ENCODE measurements at regions of chr16 and their contacts with region 1.

Region 1: DNA sequence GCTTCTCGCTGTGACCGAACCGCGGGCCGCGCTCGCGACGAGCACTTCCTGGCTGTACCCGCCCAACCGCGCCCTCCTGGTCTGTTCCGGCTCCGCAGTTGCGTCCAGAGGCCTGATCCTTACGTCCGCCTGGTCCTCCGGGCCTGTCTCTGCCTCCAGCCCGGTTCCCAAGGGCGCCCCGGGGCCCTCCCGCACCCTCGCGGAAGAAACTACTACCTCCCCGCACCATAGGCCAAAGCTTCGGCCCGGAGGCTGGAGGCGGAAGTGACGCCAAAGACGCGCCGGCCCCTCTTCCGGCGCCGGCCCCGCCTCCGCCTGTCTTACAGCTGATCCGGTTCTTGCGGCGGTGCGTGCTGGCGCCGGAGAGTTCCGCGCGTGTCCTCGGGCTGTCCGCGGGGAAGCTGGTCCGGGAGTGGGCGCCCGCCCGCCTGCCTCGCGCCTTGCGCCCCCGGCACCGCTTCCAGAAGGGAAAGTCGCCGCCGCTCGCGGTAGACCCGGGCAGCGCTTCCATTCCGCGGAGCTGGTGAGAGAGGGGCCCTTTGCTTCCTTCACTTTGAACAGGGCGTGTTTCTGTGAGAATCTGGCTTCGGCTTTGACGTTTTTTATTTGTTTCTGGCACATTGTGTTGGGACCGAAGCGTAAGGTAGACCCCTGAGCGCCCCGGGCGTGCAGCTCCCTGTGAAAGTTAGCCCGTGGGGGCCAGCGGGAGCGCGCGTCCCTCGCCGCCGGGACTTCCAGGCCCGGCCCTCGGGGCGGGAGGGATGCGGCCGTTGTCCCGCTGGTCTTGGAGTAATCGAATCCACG is at the start of gene ZNF778:
- DNase-seq: peak; percentile 78 to 86
- H3K4me3 ChIP-seq: peak within 1 kb of the TSS; percentile 71
- H3K4me3 Mint-ChIP-seq: peak within 1 kb of the TSS; percentile 89
- H3K27ac Mint-ChIP-seq: peak within 1 kb of the TSS; percentile 81
- H3K4me1 ChIP-seq: no peaks in the 10 kb centered on the region
- H3K4me1 Mint-ChIP-seq: no peaks in the 10 kb centered on the region
- H3K27me3 ChIP-seq: no peaks in the 10 kb centered on the region
- H3K27me3 Mint-ChIP-seq: no peaks in the 10 kb centered on the region
- CTCF ChIP-seq: no peak
- total RNA-seq, gene ZNF778: 13.1 and 18.1 TPM in 2 replicates

Region 2: GRCh38 chr16:88811769-88812512 is 405.6 kb before region 1 on chr16 and contains the start of gene APRT:
- CTCF ChIA-PET with region 1: no interaction called
- POLR2A ChIA-PET with region 1: interaction called, 3 read pairs
- intact Hi-C with region 1: loop called (anchors 2 kb)
- DNase-seq: peak; percentile 97 to 99
- H3K4me3 ChIP-seq: peak within 1 kb of the TSS; percentile 96
- H3K4me3 Mint-ChIP-seq: peak within 1 kb of the TSS; percentile 97
- H3K27ac Mint-ChIP-seq: peak within 1 kb of the TSS; percentile 98
- H3K4me1 ChIP-seq: peaks cover 15% of the 10 kb centered on the region
- H3K4me1 Mint-ChIP-seq: no peaks in the 10 kb centered on the region
- H3K27me3 ChIP-seq: no peaks in the 10 kb centered on the region
- H3K27me3 Mint-ChIP-seq: no peaks in the 10 kb centered on the region
- CTCF ChIP-seq: peak in 1 of 2 experiments; percentile 19
- total RNA-seq, gene APRT: 251 and 268 TPM in 2 replicates

Region 3: GRCh38 chr16:88941913-88942909 is 275.4 kb before region 1 on chr16:
- CTCF ChIA-PET with region 1: interaction called, 8 read pairs
- POLR2A ChIA-PET with region 1: no interaction called
- intact Hi-C with region 1: loop called (anchors 1 kb)
- DNase-seq: peak in 1 of 2 experiments; percentile 71
- H3K4me3 ChIP-seq: no peak overlapping the region
- H3K4me3 Mint-ChIP-seq: peak overlapping the region; percentile 58
- H3K27ac Mint-ChIP-seq: no peak overlapping the region
- H3K4me1 ChIP-seq: peaks cover 4% of the 10 kb centered on the region; the same call in 1 of the 2 replicates
- H3K4me1 Mint-ChIP-seq: no peaks in the 10 kb centered on the region
- H3K27me3 ChIP-seq: no peaks in the 10 kb centered on the region; the same call in none of the 2 replicates
- H3K27me3 Mint-ChIP-seq: peaks cover 27% of the 10 kb centered on the region
- CTCF ChIP-seq: peak; percentile 39 to 69

Region 4: GRCh38 chr16:89052890-89053592 is 164.5 kb before region 1 on chr16:
- CTCF ChIA-PET with region 1: interaction called, 3 read pairs
- POLR2A ChIA-PET with region 1: no interaction called
- intact Hi-C with region 1: loop called (anchors 2 kb)
- DNase-seq: peak; percentile 81 to 88
- H3K4me3 ChIP-seq: peak overlapping the region; percentile 68
- H3K4me3 Mint-ChIP-seq: peak overlapping the region; percentile 72
- H3K27ac Mint-ChIP-seq: peak overlapping the region; percentile 30
- H3K4me1 ChIP-seq: no peaks in the 10 kb centered on the region
- H3K4me1 Mint-ChIP-seq: peaks cover 6% of the 10 kb centered on the region
- H3K27me3 ChIP-seq: no peaks in the 10 kb centered on the region; the same call in 1 of the 2 replicates
- H3K27me3 Mint-ChIP-seq: no peaks in the 10 kb centered on the region
- CTCF ChIP-seq: peak in 1 of 2 experiments; percentile 44

Region 5: GRCh38 chr16:89171463-89172170 is 46.0 kb before region 1 on chr16 and contains the start of gene CDH15:
- CTCF ChIA-PET with region 1: interaction called, 10 read pairs
- POLR2A ChIA-PET with region 1: no interaction called
- intact Hi-C with region 1: loop called (anchors 1 kb)
- DNase-seq: peak; percentile 98 to 99
- H3K4me3 ChIP-seq: peak within 1 kb of the TSS; percentile 39
- H3K4me3 Mint-ChIP-seq: peak within 1 kb of the TSS; percentile 74
- H3K27ac Mint-ChIP-seq: no peak within 1 kb of the TSS
- H3K4me1 ChIP-seq: peaks cover 24% of the 10 kb centered on the region
- H3K4me1 Mint-ChIP-seq: peaks cover 7% of the 10 kb centered on the region
- H3K27me3 ChIP-seq: peaks cover 5% of the 10 kb centered on the region
- H3K27me3 Mint-ChIP-seq: peaks cover 7% of the 10 kb centered on the region
- CTCF ChIP-seq: no peak
- total RNA-seq, gene CDH15: not detected in 2 replicates

Region 6: DNA sequence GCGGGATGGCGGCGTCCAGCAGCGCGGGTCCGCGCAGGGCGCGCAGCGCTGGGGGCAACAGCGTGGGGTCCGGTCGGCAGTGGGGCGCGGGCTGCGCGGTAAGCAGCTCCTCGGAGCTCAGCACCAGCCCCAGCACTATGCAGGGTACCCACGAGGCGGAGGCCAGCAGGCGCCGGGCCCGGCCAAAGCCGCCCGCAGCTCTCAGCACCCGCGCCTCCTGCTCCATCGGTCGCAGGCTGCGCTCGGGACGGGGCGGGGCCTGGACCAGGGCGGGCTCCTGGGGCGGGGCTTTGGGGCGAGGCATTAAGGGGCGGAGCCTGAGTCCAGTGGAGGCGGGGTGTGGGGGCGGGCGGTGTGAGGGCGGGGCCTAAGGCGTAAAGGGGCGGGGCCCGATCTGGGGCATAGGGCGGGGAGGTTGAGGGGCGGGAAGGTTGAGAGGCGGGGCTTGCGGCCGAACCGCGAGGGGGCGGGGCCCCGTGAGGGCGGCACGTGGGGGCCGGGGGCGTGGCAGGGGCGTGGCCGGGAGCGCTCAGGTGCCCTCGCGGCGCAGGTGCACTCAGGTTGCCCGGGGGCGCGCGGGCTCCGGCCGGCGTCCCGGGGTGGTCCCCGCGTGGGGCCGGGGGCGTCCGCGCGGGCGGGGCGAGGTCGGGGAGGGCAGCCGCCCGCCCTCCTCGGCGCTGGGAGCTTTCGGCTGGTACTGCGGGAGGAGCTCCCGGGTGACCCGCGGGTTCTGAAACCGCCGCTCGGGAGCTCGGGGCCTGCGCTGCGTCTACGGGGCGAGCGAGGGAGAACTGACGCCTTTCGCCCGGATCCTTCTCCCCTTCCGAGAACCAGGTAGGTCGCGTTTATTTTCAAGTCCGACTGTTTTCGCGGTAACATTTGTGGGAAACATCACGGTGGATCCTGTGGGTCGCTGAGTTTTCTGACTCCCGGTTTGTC is 15.9 kb before region 1 on chr16:
- CTCF ChIA-PET with region 1: interaction called, 3 read pairs
- POLR2A ChIA-PET with region 1: interaction called, 5 read pairs
- intact Hi-C with region 1: loop called (anchors 2 kb)
- DNase-seq: peak; percentile 94 to 96
- H3K4me3 ChIP-seq: peak overlapping the region; percentile 62
- H3K4me3 Mint-ChIP-seq: peak overlapping the region; percentile 73
- H3K27ac Mint-ChIP-seq: no peak overlapping the region
- H3K4me1 ChIP-seq: peaks cover 17% of the 10 kb centered on the region
- H3K4me1 Mint-ChIP-seq: peaks cover 8% of the 10 kb centered on the region
- H3K27me3 ChIP-seq: no peaks in the 10 kb centered on the region; the same call in 1 of the 2 replicates
- H3K27me3 Mint-ChIP-seq: peaks cover 12% of the 10 kb centered on the region
- CTCF ChIP-seq: no peak

Region 7: DNA sequence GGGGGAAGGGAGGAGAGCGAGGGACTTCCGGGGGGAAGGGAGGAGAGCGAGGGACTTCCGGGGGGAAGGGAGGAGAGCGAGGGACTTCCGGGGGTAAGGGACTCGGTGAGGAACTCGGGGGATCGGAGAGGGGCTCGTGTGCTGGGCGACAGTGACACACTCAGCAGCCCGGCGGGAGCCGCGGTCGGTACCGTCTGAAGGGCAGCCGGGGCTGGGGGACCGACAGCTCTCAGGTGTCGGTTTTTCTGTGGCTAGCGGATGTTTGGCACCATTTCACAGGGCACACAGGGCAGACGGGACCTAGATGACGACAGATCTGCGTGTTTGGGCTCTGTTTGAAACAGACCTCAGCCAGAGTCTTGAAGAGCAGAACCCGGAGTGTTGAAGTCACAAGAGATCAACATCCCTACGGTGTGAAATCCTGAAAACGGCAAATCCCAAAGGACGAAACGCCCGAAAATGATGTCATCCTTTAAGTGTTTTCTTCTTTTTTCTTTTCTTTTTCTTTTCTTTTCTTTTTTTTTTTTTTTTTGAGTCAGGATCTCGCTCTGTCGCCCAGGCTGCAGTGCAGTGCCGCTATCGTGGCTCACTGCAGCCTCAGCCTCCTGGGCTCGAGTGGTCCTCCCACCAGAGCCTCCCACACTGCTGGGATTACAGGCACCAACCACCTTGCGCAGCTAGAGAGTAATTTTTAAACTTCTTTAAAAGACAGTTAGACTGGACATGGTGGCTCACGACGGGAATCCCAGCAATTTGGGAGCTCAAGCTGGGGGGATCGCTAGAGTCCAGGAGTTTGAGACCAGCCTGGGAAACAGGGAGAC is 23.8 kb after region 1 on chr16:
- CTCF ChIA-PET with region 1: interaction called, 5 read pairs
- POLR2A ChIA-PET with region 1: no interaction called
- intact Hi-C with region 1: loop called (anchors 2 kb)
- DNase-seq: peak; percentile 82 to 86
- H3K4me3 ChIP-seq: peak overlapping the region; percentile 92
- H3K4me3 Mint-ChIP-seq: peak overlapping the region; percentile 86
- H3K27ac Mint-ChIP-seq: peak overlapping the region; percentile 88
- H3K4me1 ChIP-seq: no peaks in the 10 kb centered on the region
- H3K4me1 Mint-ChIP-seq: no peaks in the 10 kb centered on the region
- H3K27me3 ChIP-seq: no peaks in the 10 kb centered on the region
- H3K27me3 Mint-ChIP-seq: no peaks in the 10 kb centered on the region
- CTCF ChIP-seq: no peak

Region 8: GRCh38 chr16:89357055-89357816 is 139.6 kb after region 1 on chr16:
- CTCF ChIA-PET with region 1: no interaction called
- POLR2A ChIA-PET with region 1: no interaction called
- intact Hi-C with region 1: no loop called
- DNase-seq: peak in 1 of 2 experiments; percentile 39
- H3K4me3 ChIP-seq: no peak overlapping the region
- H3K4me3 Mint-ChIP-seq: no peak overlapping the region
- H3K27ac Mint-ChIP-seq: no peak overlapping the region
- H3K4me1 ChIP-seq: peaks cover 43% of the 10 kb centered on the region
- H3K4me1 Mint-ChIP-seq: peaks cover 52% of the 10 kb centered on the region
- H3K27me3 ChIP-seq: no peaks in the 10 kb centered on the region
- H3K27me3 Mint-ChIP-seq: no peaks in the 10 kb centered on the region
- CTCF ChIP-seq: peak in 1 of 2 experiments; percentile 46

Measured in Caco-2 (cell line).